CD4-positive, alpha-beta memory T cell (primary cell): ENCODE measurements at regions of chr13 and their contacts with region 1.

Region 1: DNA sequence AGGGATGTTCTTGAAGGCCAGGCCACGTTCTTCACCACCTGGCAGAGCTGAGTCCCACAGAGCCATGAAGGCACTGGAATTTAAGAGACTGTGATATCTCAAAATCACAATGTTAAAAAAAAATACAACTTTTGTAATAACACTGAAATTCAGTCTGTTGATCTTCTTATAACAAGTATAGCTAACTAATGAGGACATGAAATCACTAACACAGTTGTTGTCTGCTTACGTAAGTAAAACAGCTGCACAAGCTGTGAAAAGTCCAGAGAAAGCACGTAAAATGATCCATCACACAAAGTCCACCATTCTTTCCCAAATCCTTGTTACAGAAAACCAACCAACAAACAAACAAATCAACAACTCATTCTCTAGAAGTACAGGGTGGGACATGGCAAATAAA is 32.9 kb downstream of the FLT3 start:
- DNase-seq: no peak
- H3K4me3 ChIP-seq: no peak overlapping the region
- H3K4me3 Mint-ChIP-seq: no peak overlapping the region
- H3K27ac ChIP-seq: no peak overlapping the region
- H3K27ac Mint-ChIP-seq: no peak overlapping the region
- H3K4me1 ChIP-seq: no peaks in the 10 kb centered on the region
- H3K4me1 Mint-ChIP-seq: peaks cover 0 to 1% (median 0%) of the 10 kb centered on the region in 4 donors
- H3K27me3 ChIP-seq: no peaks in the 10 kb centered on the region
- H3K27me3 Mint-ChIP-seq: peaks cover 1 to 3% of the 10 kb centered on the region in 2 donors

Region 2: DNA sequence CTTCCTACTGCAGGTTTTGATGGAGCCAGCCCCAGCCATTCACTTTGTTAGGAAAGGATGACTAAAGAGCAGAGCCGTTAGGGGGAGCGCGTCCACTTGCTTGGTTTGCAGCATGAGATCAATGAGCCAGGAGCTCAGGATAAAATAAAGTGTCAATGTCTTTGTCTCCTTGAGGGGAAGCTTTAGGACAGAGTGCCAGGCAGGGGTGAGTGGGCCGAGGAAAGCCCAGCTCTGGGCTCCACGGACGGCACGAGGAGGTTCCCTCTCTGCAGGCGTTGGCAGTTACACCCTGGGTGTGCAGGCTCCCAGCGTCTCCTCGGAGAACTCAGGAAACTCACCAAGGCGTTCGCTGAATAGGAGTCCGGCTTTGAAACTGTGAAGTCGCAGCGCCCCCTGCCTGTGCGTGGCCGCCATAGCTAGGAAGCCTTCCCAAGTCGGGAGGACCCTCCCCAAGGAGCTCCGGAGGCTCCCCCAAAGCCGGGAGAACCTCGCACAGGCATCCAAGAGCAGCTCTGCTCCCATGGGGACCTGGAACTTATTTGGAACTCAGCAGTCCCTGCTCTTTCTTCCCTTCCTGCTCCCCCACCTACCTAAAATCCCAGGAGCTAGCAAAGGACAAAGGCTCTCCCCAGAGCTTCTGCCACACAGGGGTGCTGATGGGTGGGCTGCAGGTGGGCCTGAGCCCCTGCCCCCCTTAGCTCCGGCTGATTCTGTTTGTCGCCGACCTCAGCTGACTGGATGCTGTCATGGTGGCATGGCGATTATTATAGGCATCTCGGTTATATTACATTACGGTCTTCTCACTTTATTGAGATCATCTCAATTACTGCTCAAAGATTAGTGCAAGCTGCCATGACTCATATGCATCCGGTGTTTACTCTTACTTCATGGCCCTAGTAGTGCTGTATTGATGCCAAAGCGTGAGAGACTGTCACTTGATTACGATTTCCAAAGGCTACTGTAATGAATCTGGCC is 240.8 kb before region 1 on chr13:
- CTCF ChIA-PET with region 1: no interaction called
- POLR2A ChIA-PET with region 1: no interaction called
- intact Hi-C with region 1: no loop called
- DNase-seq: peak; percentile 51 to 65 (median 56)
- H3K4me3 ChIP-seq: no peak overlapping the region
- H3K4me3 Mint-ChIP-seq: peak overlapping the region in 3 of 8 donors; percentile 6 to 48 (median 30)
- H3K27ac ChIP-seq: no peak overlapping the region
- H3K27ac Mint-ChIP-seq: no peak overlapping the region
- H3K4me1 ChIP-seq: peaks cover 12% of the 10 kb centered on the region
- H3K4me1 Mint-ChIP-seq: peaks cover 3 to 12% (median 5%) of the 10 kb centered on the region in 4 donors
- H3K27me3 ChIP-seq: peaks cover 17% of the 10 kb centered on the region
- H3K27me3 Mint-ChIP-seq: peaks cover 37 to 58% of the 10 kb centered on the region in 2 donors

Region 3: DNA sequence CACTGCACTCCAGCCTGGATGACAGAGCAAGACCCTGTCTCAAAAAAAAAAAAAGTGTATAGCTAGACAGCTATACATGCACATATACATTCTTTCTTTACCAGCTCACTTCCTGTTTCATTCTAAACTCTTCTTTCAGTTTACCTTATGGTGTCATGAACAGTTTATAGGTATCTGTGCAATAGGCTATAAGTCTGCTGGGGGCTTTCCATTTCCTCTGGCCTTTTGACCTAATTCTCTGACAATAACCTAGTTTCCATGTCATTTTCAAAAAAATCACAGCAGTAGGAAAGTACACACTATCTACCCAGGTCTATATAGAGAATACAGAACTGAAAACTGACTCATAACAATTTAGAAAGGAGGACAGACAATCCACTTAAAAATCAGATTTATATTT is 54.6 kb before region 1 on chr13:
- CTCF ChIA-PET with region 1: no interaction called
- POLR2A ChIA-PET with region 1: no interaction called
- intact Hi-C with region 1: no loop called
- DNase-seq: no peak
- H3K4me3 ChIP-seq: no peak overlapping the region
- H3K4me3 Mint-ChIP-seq: no peak overlapping the region
- H3K27ac ChIP-seq: no peak overlapping the region
- H3K27ac Mint-ChIP-seq: no peak overlapping the region
- H3K4me1 ChIP-seq: no peaks in the 10 kb centered on the region
- H3K4me1 Mint-ChIP-seq: no peaks in the 10 kb centered on the region
- H3K27me3 ChIP-seq: no peaks in the 10 kb centered on the region
- H3K27me3 Mint-ChIP-seq: peaks cover 10 to 27% of the 10 kb centered on the region in 2 donors

Region 4: DNA sequence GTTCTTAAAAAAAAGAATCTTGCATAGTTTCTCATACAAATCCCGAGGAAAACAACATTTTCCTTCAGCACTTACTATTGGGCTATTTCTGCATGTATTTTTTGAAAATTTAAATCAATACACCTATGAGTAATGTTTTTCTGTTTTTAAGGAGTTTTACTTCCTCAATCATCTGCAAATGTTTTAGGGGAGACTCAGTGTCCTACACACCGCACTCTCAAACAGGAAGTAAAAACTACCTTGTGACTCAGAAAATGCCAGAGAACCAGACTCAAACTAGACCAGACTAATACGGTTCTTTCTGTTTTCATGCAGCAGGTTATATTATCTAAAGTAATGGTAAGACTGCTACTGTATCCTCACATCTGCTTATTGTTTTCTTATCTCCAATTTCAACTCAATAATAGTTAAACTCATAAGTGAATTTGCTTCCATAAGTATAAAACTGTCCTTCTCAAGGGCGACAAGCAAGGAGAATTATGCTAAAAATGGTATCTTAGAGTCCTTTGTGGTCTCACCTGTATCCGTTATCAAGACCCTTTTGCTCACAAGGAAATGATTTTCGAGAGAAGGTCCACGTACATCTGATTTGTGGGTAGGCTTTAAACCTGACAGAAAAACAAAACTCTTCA is 19.6 kb before region 1 on chr13:
- CTCF ChIA-PET with region 1: no interaction called
- POLR2A ChIA-PET with region 1: no interaction called
- intact Hi-C with region 1: no loop called
- DNase-seq: no peak
- H3K4me3 ChIP-seq: no peak overlapping the region
- H3K4me3 Mint-ChIP-seq: peak overlapping the region in 2 of 8 donors; percentile 12 to 31
- H3K27ac ChIP-seq: no peak overlapping the region
- H3K27ac Mint-ChIP-seq: no peak overlapping the region
- H3K4me1 ChIP-seq: peaks cover 7% of the 10 kb centered on the region
- H3K4me1 Mint-ChIP-seq: peaks cover 12 to 15% (median 14%) of the 10 kb centered on the region in 4 donors
- H3K27me3 ChIP-seq: no peaks in the 10 kb centered on the region
- H3K27me3 Mint-ChIP-seq: peaks cover under 1 to 4% of the 10 kb centered on the region in 2 donors

Region 5: DNA sequence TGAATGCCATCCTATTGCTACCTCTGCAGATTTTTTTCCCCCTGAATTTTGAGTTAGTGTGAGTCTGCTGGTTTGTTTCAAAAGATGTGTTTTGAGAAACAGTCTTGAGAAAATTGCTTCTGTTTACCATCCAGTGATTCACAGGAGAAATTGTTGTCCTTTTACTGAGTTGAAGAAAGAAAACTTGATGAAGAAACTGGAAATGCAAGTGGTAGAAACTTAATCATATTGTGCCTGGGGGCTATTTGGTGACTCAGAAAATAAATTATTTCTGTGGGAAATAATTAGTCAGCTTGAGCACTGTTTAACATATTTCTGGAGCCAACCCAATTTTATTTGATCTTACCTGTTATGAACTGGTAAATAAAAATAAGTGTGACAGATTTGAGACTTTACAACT is 106.3 kb after region 1 on chr13:
- CTCF ChIA-PET with region 1: no interaction called
- POLR2A ChIA-PET with region 1: no interaction called
- intact Hi-C with region 1: no loop called
- DNase-seq: no peak
- H3K4me3 ChIP-seq: no peak overlapping the region
- H3K4me3 Mint-ChIP-seq: no peak overlapping the region
- H3K27ac ChIP-seq: no peak overlapping the region
- H3K27ac Mint-ChIP-seq: peak overlapping the region in 1 of 7 donors; percentile 14
- H3K4me1 ChIP-seq: peaks cover 5% of the 10 kb centered on the region
- H3K4me1 Mint-ChIP-seq: peaks cover 19 to 32% (median 30%) of the 10 kb centered on the region in 4 donors
- H3K27me3 ChIP-seq: no peaks in the 10 kb centered on the region
- H3K27me3 Mint-ChIP-seq: no peaks in the 10 kb centered on the region

Region 6: DNA sequence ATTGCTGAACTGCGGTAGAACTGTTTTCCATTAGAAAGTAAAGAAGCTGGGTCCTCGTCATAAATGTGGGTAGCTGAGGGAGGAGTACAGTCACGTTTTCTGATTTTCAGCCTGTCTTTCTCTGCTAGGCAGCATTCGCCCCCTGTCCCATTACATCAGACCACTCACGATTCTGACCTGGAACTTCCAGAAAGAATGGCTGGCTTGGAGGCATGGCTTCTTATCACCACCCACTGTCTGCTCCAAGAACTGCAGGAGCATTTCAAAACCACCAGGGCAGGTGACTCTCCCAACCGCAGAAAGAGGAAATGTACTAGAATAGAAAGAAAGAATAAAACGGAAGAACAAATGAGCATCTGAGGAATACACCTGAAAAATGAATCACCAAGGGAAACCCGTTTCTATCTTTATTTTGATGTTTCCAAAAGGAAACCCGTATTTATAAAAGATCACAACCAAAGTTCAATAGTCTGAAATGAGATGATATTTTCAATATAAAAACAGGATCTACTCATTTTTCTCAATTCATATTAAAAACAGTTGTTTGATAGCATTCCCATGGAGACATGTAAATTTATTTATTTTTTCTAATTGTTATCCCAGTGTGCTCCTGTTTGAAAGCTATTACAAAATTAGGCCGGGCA is 569.3 kb after region 1 on chr13:
- CTCF ChIA-PET with region 1: no interaction called
- POLR2A ChIA-PET with region 1: no interaction called
- intact Hi-C with region 1: loop called (anchors 10 kb)
- DNase-seq: peak; percentile 37 to 56 (median 46)
- H3K4me3 ChIP-seq: no peak overlapping the region
- H3K4me3 Mint-ChIP-seq: peak overlapping the region in 6 of 8 donors; percentile 2 to 69 (median 34)
- H3K27ac ChIP-seq: no peak overlapping the region
- H3K27ac Mint-ChIP-seq: peak overlapping the region in 2 of 7 donors; percentile 0 to 1
- H3K4me1 ChIP-seq: peaks cover 9% of the 10 kb centered on the region
- H3K4me1 Mint-ChIP-seq: peaks cover 5 to 6% (median 6%) of the 10 kb centered on the region in 4 donors
- H3K27me3 ChIP-seq: no peaks in the 10 kb centered on the region
- H3K27me3 Mint-ChIP-seq: peaks cover 12 to 17% of the 10 kb centered on the region in 2 donors